GM12878 (cell line): ENCODE measurements at regions of chr2 and their contacts with region 1.

Region 1: GRCh38 chr2:88880441-88880953 is 189.0 kb downstream of the RPIA start:
- DNase-seq: no peak
- ATAC-seq: peak; percentile 86
- H3K4me3 ChIP-seq: peak overlapping the region; percentile 41; the same call in 1 of the 2 replicates
- H3K27ac ChIP-seq: peak overlapping the region; percentile 34
- H3K4me1 ChIP-seq: peaks cover 6% of the 10 kb centered on the region
- H3K27me3 ChIP-seq: no peaks in the 10 kb centered on the region
- CTCF ChIP-seq: peak; percentile 47 to 49 (median 48); a peak in 4 of 6 replicates
- EP300 ChIP-seq: no peak
- POLR2A ChIP-seq: no peak
- RAD21 ChIP-seq: peak; percentile 75

Region 2: GRCh38 chr2:88638743-88639142 is 241.8 kb before region 1 on chr2:
- CTCF ChIA-PET with region 1: no interaction called
- POLR2A ChIA-PET with region 1: no interaction called
- RAD21 ChIA-PET with region 1: no interaction called
- SMC1A ChIA-PET with region 1: no interaction called
- in situ Hi-C with region 1: no loop called
- intact Hi-C with region 1: no loop called
- DNase-seq: no peak
- ATAC-seq: peak; percentile 75
- H3K4me3 ChIP-seq: no peak overlapping the region
- H3K27ac ChIP-seq: no peak overlapping the region
- H3K4me1 ChIP-seq: peaks cover 7% of the 10 kb centered on the region; the same call in 1 of the 2 replicates
- H3K27me3 ChIP-seq: no peaks in the 10 kb centered on the region
- CTCF ChIP-seq: no peak
- EP300 ChIP-seq: no peak
- POLR2A ChIP-seq: no peak
- RAD21 ChIP-seq: no peak

Region 3: GRCh38 chr2:88651660-88652059 is 228.8 kb before region 1 on chr2:
- CTCF ChIA-PET with region 1: no interaction called
- POLR2A ChIA-PET with region 1: no interaction called
- RAD21 ChIA-PET with region 1: no interaction called
- SMC1A ChIA-PET with region 1: no interaction called
- in situ Hi-C with region 1: no loop called
- intact Hi-C with region 1: no loop called
- DNase-seq: no peak
- ATAC-seq: no peak
- H3K4me3 ChIP-seq: no peak overlapping the region
- H3K27ac ChIP-seq: no peak overlapping the region
- H3K4me1 ChIP-seq: no peaks in the 10 kb centered on the region
- H3K27me3 ChIP-seq: no peaks in the 10 kb centered on the region
- CTCF ChIP-seq: no peak
- EP300 ChIP-seq: no peak
- POLR2A ChIP-seq: no peak
- RAD21 ChIP-seq: no peak

Region 4: DNA sequence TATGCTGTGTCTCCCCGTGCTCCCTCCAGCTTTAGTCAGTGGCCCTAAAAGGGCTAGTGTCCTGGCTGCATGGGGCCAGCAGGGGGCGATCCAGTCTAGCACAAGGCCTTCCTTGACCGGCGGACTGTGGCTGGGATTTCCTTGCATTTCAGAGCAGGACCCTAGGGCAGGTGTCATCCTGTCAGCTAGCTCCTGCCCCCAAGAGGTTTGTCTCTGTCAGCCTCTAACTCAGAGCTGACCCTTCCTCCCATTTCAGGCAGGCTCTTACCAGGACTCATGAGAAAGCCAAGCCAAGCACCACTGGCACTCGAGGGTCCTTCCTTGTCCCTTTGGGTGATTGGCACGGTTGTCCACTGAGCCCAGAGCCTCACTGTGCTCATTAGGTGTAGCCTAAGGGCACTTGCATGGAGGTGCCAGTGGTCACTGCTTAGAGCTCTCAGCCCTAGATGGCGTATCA is 48.7 kb before region 1 on chr2:
- CTCF ChIA-PET with region 1: no interaction called
- POLR2A ChIA-PET with region 1: no interaction called
- RAD21 ChIA-PET with region 1: no interaction called
- SMC1A ChIA-PET with region 1: no interaction called
- in situ Hi-C with region 1: no loop called
- intact Hi-C with region 1: no loop called
- DNase-seq: no peak
- ATAC-seq: peak; percentile 98
- H3K4me3 ChIP-seq: no peak overlapping the region
- H3K27ac ChIP-seq: no peak overlapping the region; the same call in 1 of the 2 replicates
- H3K4me1 ChIP-seq: no peaks in the 10 kb centered on the region
- H3K27me3 ChIP-seq: no peaks in the 10 kb centered on the region
- CTCF ChIP-seq: peak; percentile 88 to 95 (median 89)
- EP300 ChIP-seq: no peak
- POLR2A ChIP-seq: no peak
- RAD21 ChIP-seq: peak; percentile 90

Region 5: DNA sequence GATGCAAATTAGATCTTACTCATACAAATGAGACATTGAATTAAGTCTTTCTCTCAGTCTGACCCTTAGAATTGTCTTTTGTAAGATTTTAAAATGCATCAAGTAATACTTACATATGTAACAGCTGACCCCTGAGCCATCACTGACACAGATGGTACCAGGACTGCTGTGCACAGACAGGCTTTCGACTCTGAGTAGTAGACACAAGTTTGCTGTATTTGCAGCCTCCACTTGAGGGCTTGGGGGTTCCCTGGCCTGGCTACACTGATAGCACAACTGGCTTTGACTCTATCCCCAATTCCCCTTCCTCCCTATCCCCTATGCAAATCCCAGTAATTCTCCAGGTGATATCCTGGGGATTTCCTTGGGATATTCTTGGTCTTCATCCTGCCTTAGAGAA is 11.7 kb after region 1 on chr2:
- CTCF ChIA-PET with region 1: interaction called, 13 read pairs
- POLR2A ChIA-PET with region 1: no interaction called
- RAD21 ChIA-PET with region 1: interaction called, 4 read pairs
- SMC1A ChIA-PET with region 1: interaction called, 4 read pairs
- in situ Hi-C with region 1: no loop called
- intact Hi-C with region 1: loop called (anchors 2 kb)
- DNase-seq: no peak
- ATAC-seq: no peak
- H3K4me3 ChIP-seq: no peak overlapping the region
- H3K27ac ChIP-seq: no peak overlapping the region
- H3K4me1 ChIP-seq: no peaks in the 10 kb centered on the region
- H3K27me3 ChIP-seq: no peaks in the 10 kb centered on the region
- CTCF ChIP-seq: no peak
- EP300 ChIP-seq: no peak
- POLR2A ChIP-seq: no peak
- RAD21 ChIP-seq: no peak

Region 6: DNA sequence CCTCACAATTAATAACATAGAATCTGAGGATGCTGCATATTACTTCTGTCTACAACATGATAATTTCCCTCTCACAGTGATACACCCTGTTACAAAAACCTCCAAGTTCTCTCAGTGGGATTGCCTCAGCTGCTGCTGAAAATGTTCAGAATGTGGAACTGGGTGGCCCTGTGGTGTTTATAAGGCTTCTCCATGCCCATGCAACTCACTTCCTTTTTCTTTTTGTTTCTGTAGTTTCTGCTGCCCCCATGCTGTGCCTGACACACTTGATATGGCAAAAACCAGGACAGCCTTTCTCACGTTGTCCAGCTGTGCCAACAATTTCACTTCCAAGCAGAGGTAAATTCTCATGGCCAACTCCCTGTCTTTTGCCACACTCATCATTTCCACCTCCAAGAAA is 17.2 kb after region 1 on chr2:
- CTCF ChIA-PET with region 1: interaction called, 13 read pairs
- POLR2A ChIA-PET with region 1: no interaction called
- RAD21 ChIA-PET with region 1: interaction called, 4 read pairs
- SMC1A ChIA-PET with region 1: interaction called, 4 read pairs
- in situ Hi-C with region 1: no loop called
- intact Hi-C with region 1: loop called (anchors 2 kb)
- DNase-seq: no peak
- ATAC-seq: no peak
- H3K4me3 ChIP-seq: no peak overlapping the region
- H3K27ac ChIP-seq: no peak overlapping the region
- H3K4me1 ChIP-seq: no peaks in the 10 kb centered on the region
- H3K27me3 ChIP-seq: no peaks in the 10 kb centered on the region
- CTCF ChIP-seq: 0 out of 6 replicates have a peak, but pooled peaks of 1 of the 3 experiments have one; percentile 7
- EP300 ChIP-seq: no peak
- POLR2A ChIP-seq: no peak
- RAD21 ChIP-seq: no peak

Region 7: GRCh38 chr2:88919087-88919738 is 38.7 kb after region 1 on chr2:
- CTCF ChIA-PET with region 1: interaction called, 12 read pairs
- POLR2A ChIA-PET with region 1: no interaction called
- RAD21 ChIA-PET with region 1: no interaction called
- SMC1A ChIA-PET with region 1: interaction called, 8 read pairs
- in situ Hi-C with region 1: no loop called
- intact Hi-C with region 1: loop called (anchors 1 kb)
- DNase-seq: no peak
- ATAC-seq: no peak
- H3K4me3 ChIP-seq: no peak overlapping the region
- H3K27ac ChIP-seq: no peak overlapping the region
- H3K4me1 ChIP-seq: no peaks in the 10 kb centered on the region
- H3K27me3 ChIP-seq: no peaks in the 10 kb centered on the region
- CTCF ChIP-seq: peak; percentile 33 to 42 (median 38); a peak in 4 of 6 replicates
- EP300 ChIP-seq: no peak
- POLR2A ChIP-seq: no peak
- RAD21 ChIP-seq: 0 out of 2 replicates have a peak, but pooled peaks have one; percentile 27